ENCODE measurements at regions of chr3 and their contacts with region 1.

Region 1: DNA sequence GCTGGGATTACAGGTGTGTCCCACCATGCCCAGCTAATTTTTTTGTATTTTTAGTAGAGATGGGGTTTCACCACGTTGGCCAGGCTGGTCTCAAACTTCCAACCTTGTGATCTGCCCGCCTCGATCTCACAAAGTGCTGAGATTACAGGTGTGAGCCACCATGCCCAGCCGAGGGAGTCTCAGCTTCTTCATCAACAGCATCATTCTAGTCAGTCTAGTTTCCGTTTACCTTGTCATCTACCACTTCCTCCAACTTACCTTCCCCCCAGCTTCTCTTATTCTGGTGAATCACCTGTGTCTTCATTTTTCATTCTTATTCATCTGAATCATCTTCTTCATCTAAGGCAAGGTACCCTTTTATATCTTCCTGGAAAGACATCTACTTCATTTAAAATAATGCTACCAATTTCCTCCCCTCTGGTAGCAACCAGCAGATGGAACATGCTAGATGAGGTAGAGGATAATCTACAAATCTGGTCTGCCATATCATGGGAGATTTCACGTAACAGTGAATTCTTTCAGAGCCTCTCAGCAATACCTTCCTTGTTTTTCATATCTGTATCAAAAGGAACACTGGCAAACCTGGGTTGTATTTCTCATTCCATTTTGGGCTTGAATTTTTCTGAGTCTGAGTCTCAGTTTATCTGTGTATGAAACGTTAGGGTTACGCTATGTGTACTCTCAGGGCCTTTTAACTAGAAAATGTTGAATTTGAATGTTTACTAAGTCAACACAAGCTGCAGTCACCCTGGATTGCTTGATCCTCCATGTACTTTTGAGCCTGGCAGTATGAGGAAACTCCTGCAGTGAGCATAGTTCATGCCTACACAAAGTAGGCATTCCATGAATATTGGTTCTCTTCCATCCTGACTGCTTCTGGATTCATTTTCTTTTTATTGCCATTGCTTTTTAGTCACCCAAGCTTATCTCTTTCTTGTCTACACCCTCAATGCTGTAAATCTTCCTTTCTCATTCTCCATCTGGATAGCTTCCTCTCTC is 16.8 kb downstream of the LPP start:
- DNase-seq: no peak
- H3K4me3 Mint-ChIP-seq: no peak overlapping the region
- H3K27ac Mint-ChIP-seq: peak overlapping the region; percentile 2
- H3K4me1 Mint-ChIP-seq: peaks cover 13% of the 10 kb centered on the region
- H3K27me3 Mint-ChIP-seq: no peaks in the 10 kb centered on the region
- CTCF ChIP-seq: no peak

Region 2: DNA sequence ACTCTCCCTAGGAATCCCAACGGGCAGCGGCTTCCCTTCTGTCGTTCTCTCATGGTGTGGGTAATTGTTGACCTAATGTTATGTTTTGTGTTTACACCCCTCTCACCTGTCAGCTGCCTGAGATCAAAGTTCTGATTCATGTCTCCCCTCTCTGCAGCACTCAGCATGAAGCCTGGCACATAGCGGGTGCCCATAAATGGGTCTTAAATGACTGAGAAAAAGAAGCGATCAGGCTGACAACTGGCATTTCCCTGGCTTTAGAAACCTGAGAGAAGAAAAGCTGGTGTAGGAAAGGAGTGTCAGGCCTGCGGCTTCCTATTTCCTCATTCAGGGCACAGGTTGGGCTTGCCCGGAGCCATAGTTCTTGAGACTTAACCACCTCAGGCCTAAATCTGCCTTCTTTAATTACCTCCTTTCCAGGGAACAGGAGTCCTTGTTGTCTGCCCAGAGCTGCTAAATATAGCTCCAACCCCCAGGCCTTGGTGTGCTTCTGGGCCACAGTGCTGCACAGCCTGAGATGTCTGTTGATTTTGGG is 15.0 kb after region 1 on chr3:
- CTCF ChIA-PET with region 1: interaction called, 10 read pairs
- POLR2A ChIA-PET with region 1: no interaction called
- intact Hi-C with region 1: no loop called
- DNase-seq: peak; percentile 38
- H3K4me3 Mint-ChIP-seq: no peak overlapping the region
- H3K27ac Mint-ChIP-seq: no peak overlapping the region
- H3K4me1 Mint-ChIP-seq: peaks cover 38% of the 10 kb centered on the region
- H3K27me3 Mint-ChIP-seq: no peaks in the 10 kb centered on the region
- CTCF ChIP-seq: no peak